ENCODE measurements at regions of chr1 and their contacts with region 1.

Region 1: DNA sequence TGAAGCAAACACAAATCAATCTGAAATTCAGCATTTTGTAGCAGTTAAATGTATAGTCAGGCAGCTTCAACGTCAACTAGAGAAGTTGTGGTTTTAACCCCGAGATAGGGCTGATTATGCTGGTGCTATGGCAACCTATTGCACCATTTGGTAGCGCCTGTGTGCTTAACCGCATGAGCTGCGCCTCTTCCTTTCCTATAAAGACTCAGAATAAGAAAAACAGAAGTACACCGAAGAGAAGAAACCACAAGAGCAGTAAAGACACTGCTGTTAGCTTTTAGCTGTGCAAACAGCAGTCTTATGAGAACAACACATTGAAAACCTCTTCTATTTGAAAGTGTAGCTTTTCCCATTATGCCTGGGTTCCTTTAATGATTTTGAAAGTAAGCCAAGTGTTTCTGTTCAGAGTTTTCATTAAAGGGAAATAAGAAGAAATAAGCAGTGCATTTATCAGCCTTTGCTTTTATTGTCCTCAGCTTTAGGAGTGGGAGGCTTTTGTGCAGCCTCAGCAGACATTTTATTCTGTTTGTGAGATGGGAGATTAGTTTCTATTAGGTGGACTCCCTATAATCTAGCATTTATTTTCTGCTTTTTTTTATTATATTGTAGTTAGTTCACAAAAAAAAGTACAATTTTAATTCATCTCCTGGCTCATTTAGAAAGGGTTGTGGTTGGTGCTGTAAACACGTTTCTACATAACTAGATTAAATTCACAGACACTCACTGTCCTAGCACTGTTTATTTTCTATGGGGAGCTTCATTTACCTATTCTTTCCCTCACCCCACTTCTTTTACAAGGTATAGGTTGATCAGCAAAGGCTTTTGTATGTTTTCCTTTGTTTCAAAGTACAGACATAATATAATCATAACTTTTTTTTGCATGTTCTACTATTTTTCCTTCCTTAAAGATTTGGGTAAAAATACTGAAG is 43.3 kb downstream of the PTPRC start:
- DNase-seq: peak; percentile 87 to 96 (median 94)
- H3K4me3 ChIP-seq: peak overlapping the region in 1 of 2 donors; percentile 33
- H3K4me3 Mint-ChIP-seq: peak overlapping the region; percentile 63 to 87 (median 81)
- H3K27ac ChIP-seq: peak overlapping the region; percentile 94
- H3K27ac Mint-ChIP-seq: peak overlapping the region; percentile 97 to 99 (median 99)
- H3K4me1 ChIP-seq: peaks cover 95% of the 10 kb centered on the region
- H3K4me1 Mint-ChIP-seq: peaks cover 64 to 92% (median 73%) of the 10 kb centered on the region in 4 donors
- H3K27me3 ChIP-seq: no peaks in the 10 kb centered on the region
- H3K27me3 Mint-ChIP-seq: no peaks in the 10 kb centered on the region

Region 2: DNA sequence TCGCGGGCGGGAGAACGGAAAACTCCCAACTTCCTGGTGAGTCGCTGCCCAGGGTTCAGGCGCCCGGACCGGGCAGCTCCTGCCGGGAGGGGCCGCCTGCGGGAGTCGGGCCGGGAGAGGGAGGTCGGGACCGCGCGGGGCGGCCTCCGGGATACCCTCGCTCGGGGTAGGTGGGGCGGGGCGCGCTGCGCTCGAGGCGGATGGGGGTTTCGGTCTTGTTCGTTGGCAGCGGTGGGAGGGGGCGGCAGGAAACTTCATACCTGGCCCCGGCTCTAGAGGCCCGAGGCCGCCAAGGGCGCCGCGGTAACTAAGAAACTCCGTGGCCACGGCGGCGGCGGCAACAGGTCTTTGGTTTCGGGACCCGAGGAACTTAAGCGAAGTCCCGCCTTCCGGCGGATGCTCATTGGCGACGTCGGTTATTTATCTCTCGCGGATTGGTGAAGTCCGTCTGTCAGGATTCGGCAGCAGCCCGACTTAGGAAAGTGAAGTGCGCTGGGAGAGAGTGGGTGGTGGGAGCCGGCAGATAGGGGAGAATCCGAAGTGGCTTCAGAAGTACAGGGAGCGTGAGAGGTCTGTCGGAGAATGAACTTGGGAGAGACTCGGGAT is 524.8 kb before region 1 on chr1:
- CTCF ChIA-PET with region 1: no interaction called
- POLR2A ChIA-PET with region 1: interaction called, 4 read pairs
- intact Hi-C with region 1: loop called (anchors 1 kb)
- DNase-seq: peak; percentile 77 to 89 (median 79)
- H3K4me3 ChIP-seq: peak overlapping the region; percentile 59 to 83
- H3K4me3 Mint-ChIP-seq: peak overlapping the region; percentile 98 to 100 (median 100)
- H3K27ac ChIP-seq: peak overlapping the region; percentile 95
- H3K27ac Mint-ChIP-seq: peak overlapping the region; percentile 98 to 100 (median 100)
- H3K4me1 ChIP-seq: peaks cover 43% of the 10 kb centered on the region
- H3K4me1 Mint-ChIP-seq: peaks cover 27 to 57% (median 41%) of the 10 kb centered on the region in 4 donors
- H3K27me3 ChIP-seq: no peaks in the 10 kb centered on the region
- H3K27me3 Mint-ChIP-seq: no peaks in the 10 kb centered on the region

Region 3: DNA sequence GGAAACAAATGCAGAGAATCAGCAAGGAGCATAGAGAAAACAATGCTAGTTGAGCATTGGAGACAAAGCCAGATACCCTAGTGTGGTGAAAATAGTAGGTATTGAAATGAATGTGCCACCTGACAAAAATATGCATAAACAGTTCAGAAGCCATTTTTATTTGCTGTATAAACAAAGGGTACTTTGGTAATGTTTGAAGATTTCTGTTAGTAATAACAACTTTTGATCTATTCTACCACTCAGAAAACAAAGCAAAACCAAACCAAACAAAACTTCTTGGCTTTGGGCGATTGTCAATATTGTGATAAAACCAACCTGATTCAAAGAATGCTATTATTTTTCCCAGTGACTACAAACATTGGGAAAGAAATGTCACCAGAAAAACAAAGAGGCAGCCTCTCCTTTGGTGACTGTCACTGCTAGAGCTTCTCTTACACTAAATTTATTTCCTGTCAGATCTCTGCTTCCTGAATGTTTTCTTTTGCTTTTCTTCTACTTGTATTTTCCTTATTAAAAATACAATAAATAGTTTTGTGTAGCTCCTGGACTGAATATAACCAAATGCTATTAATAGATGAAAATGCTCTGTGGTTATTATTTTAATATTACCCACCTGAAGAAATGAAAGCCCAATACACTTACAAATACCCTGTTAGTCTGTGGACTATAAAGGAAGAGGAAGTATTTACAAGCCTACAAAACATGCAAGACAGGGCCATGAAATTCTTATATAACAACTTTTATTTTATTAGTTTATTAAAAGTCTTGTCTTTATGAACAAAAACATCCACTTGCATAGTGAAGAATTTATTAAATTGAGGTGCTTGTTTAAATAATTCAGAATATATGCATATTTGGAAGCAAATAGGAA is 147.3 kb before region 1 on chr1:
- CTCF ChIA-PET with region 1: no interaction called
- POLR2A ChIA-PET with region 1: interaction called, 15 read pairs
- intact Hi-C with region 1: no loop called
- DNase-seq: no peak
- H3K4me3 ChIP-seq: peak overlapping the region in 1 of 2 donors; percentile 28
- H3K4me3 Mint-ChIP-seq: peak overlapping the region; percentile 65 to 83 (median 77)
- H3K27ac ChIP-seq: peak overlapping the region; percentile 49
- H3K27ac Mint-ChIP-seq: peak overlapping the region; percentile 29 to 90 (median 86)
- H3K4me1 ChIP-seq: peaks cover 59% of the 10 kb centered on the region
- H3K4me1 Mint-ChIP-seq: peaks cover 51 to 78% (median 61%) of the 10 kb centered on the region in 4 donors
- H3K27me3 ChIP-seq: no peaks in the 10 kb centered on the region
- H3K27me3 Mint-ChIP-seq: no peaks in the 10 kb centered on the region

Region 4: DNA sequence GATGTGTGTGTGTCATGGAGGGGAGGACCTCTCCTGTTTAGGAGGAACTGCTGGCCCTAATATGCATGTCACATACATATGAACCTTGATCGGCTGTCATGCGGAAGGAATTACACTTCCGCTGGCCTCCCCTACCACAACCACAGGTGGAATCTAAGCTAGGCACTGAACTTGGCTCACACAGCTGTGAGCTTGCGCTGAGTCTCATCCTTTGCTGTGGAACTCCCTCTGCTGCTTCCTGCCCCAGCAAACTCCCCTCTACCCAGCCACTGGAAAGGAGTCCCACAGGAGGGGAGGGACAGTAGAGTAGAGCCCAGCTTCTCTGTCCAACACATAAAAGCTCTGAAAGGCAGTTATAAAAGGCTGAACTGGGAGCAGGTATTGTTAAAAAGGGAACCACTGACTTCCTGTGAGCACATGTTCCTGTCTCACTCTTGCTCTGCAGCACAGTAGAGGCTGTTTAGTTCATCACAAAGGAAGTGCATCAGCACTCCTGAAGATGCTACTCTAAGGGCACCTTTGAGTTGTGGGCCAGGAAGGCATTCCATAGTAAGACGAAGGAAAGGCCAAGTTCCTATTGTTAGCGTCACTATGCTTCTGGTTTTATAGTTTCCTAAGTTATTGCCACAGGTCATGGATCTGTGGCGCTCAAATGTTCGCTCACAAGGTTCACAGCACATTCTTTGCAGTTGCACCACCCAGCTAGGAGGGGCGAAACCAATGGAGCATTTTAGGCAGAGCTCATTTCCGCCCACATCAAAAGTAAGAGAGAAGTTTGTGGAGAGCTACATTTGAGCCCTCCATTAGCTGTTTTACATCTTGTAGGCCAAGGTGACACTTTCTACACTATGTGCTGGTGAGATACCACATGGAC is 60.9 kb before region 1 on chr1:
- CTCF ChIA-PET with region 1: interaction called, 69 read pairs
- POLR2A ChIA-PET with region 1: interaction called, 277 read pairs
- intact Hi-C with region 1: loop called (anchors 1 kb)
- DNase-seq: peak; percentile 77 to 87 (median 80)
- H3K4me3 ChIP-seq: peak overlapping the region; percentile 18 to 59
- H3K4me3 Mint-ChIP-seq: peak overlapping the region; percentile 73 to 92 (median 85)
- H3K27ac ChIP-seq: peak overlapping the region; percentile 73
- H3K27ac Mint-ChIP-seq: peak overlapping the region; percentile 91 to 98 (median 95)
- H3K4me1 ChIP-seq: peaks cover 100% of the 10 kb centered on the region
- H3K4me1 Mint-ChIP-seq: peaks cover 62 to 88% (median 79%) of the 10 kb centered on the region in 4 donors
- H3K27me3 ChIP-seq: no peaks in the 10 kb centered on the region
- H3K27me3 Mint-ChIP-seq: no peaks in the 10 kb centered on the region

Region 5: GRCh38 chr1:198638894-198639635 is 43.0 kb before region 1 on chr1 and contains the start of gene PTPRC:
- CTCF ChIA-PET with region 1: interaction called, 16 read pairs
- POLR2A ChIA-PET with region 1: interaction called, 427 read pairs
- intact Hi-C with region 1: loop called (anchors 1 kb)
- DNase-seq: peak in 4 of 5 donors; percentile 50 to 67 (median 60)
- H3K4me3 ChIP-seq: peak within 1 kb of the TSS; percentile 61 to 78
- H3K4me3 Mint-ChIP-seq: peak within 1 kb of the TSS; percentile 82 to 99 (median 94)
- H3K27ac ChIP-seq: peak within 1 kb of the TSS; percentile 83
- H3K27ac Mint-ChIP-seq: peak within 1 kb of the TSS; percentile 86 to 98 (median 95)
- H3K4me1 ChIP-seq: peaks cover 60% of the 10 kb centered on the region
- H3K4me1 Mint-ChIP-seq: peaks cover 34 to 46% (median 39%) of the 10 kb centered on the region in 4 donors
- H3K27me3 ChIP-seq: no peaks in the 10 kb centered on the region
- H3K27me3 Mint-ChIP-seq: no peaks in the 10 kb centered on the region
- total RNA-seq, gene PTPRC: 974 to 987 TPM

Region 6: DNA sequence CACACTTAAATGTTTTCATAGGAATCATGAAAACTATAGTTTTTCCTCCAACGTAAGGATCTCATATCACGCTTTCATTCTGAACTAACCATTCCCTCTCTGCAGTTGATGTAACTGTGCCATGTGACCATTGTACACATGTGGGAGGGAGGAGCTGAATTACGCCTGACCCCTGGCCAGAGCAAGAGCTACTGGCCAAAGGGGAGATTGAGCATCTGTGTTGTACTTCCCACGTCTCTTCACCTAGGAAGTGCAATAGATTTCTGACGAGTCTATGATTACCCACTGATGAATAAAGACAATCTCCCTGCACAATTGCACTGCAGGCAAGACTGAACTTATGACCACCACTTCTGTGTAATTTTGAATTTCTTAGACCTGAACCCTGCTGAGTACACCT is 19.3 kb before region 1 on chr1:
- CTCF ChIA-PET with region 1: interaction called, 11 read pairs
- POLR2A ChIA-PET with region 1: interaction called, 449 read pairs
- intact Hi-C with region 1: no loop called
- DNase-seq: no peak
- H3K4me3 ChIP-seq: peak overlapping the region; percentile 20 to 24
- H3K4me3 Mint-ChIP-seq: peak overlapping the region; percentile 75 to 85 (median 80)
- H3K27ac ChIP-seq: peak overlapping the region; percentile 69
- H3K27ac Mint-ChIP-seq: peak overlapping the region; percentile 88 to 96 (median 93)
- H3K4me1 ChIP-seq: peaks cover 95% of the 10 kb centered on the region
- H3K4me1 Mint-ChIP-seq: peaks cover 66 to 82% (median 76%) of the 10 kb centered on the region in 4 donors
- H3K27me3 ChIP-seq: no peaks in the 10 kb centered on the region
- H3K27me3 Mint-ChIP-seq: no peaks in the 10 kb centered on the region

Measured in CD4-positive, alpha-beta memory T cell (primary cell).